Transverse colon (tissue), 4 donors: ENCODE measurements at regions of chr18 and their contacts with region 1.

Region 1: GRCh38 chr18:76982841-76983587 is 149.6 kb downstream of the MBP start:
- DNase-seq: peak; percentile 94
- H3K4me3 ChIP-seq: no peak overlapping the region
- H3K27ac ChIP-seq: no peak overlapping the region
- H3K4me1 ChIP-seq: peaks cover 1 to 22% (median 10%) of the 10 kb centered on the region in 4 donors
- H3K27me3 ChIP-seq: no peaks in the 10 kb centered on the region
- CTCF ChIP-seq: peak; percentile 89 to 96 (median 90)
- EP300 ChIP-seq: no peak
- POLR2A ChIP-seq: no peak

Region 2: GRCh38 chr18:75063615-75064512 is 1919.2 kb before region 1 on chr18:
- in situ Hi-C with region 1: no loop called
- intact Hi-C with region 1: no loop called
- DNase-seq: no peak
- H3K4me3 ChIP-seq: no peak overlapping the region
- H3K27ac ChIP-seq: no peak overlapping the region
- H3K4me1 ChIP-seq: no peaks in the 10 kb centered on the region
- H3K27me3 ChIP-seq: no peaks in the 10 kb centered on the region
- CTCF ChIP-seq: no peak
- EP300 ChIP-seq: no peak
- POLR2A ChIP-seq: no peak

Region 3: DNA sequence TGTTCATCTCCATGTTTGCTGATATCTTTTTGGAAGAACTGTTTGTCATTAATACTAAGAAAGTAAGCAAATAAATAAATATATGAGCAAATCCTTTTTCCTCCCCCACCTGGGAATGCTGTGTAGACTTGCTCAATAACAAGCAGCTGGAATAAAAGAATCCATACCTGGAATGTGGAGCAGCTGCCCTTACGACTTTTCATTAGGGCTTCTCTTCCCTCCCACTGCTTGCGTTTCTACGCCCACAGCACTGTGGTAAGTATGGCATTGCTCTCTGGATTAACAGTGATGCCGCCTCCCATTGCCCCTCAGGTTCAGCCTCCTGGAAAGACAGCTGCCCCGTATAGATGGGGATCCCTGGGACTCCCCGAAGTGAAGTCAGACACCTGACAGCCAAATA is 200.4 kb before region 1 on chr18:
- in situ Hi-C with region 1: no loop called
- intact Hi-C with region 1: no loop called
- DNase-seq: no peak
- H3K4me3 ChIP-seq: no peak overlapping the region
- H3K27ac ChIP-seq: no peak overlapping the region
- H3K4me1 ChIP-seq: no peaks in the 10 kb centered on the region
- H3K27me3 ChIP-seq: peaks cover 2% of the 10 kb centered on the region
- CTCF ChIP-seq: no peak
- EP300 ChIP-seq: no peak
- POLR2A ChIP-seq: no peak

Region 4: GRCh38 chr18:76803814-76804213 is 179.2 kb before region 1 on chr18:
- in situ Hi-C with region 1: loop called in 2 of 4 experiments (anchors 10 to 25 kb)
- intact Hi-C with region 1: loop called (anchors 5 kb)
- DNase-seq: peak; percentile 74
- H3K4me3 ChIP-seq: peak overlapping the region in 1 of 4 donors; percentile 10
- H3K27ac ChIP-seq: peak overlapping the region in 3 of 4 donors; percentile 24 to 35 (median 27)
- H3K4me1 ChIP-seq: peaks cover 5 to 22% (median 15%) of the 10 kb centered on the region in 4 donors
- H3K27me3 ChIP-seq: peaks cover 17% of the 10 kb centered on the region
- CTCF ChIP-seq: peak; percentile 71 to 75 (median 72)
- EP300 ChIP-seq: no peak
- POLR2A ChIP-seq: no peak

Region 5: GRCh38 chr18:76922107-76922506 is 60.9 kb before region 1 on chr18:
- in situ Hi-C with region 1: loop called in 1 of 4 experiments (anchors 10 kb)
- intact Hi-C with region 1: no loop called
- DNase-seq: peak; percentile 64
- H3K4me3 ChIP-seq: no peak overlapping the region
- H3K27ac ChIP-seq: no peak overlapping the region
- H3K4me1 ChIP-seq: peaks cover 0 to 8% (median 0%) of the 10 kb centered on the region in 4 donors
- H3K27me3 ChIP-seq: no peaks in the 10 kb centered on the region
- CTCF ChIP-seq: peak; percentile 42 to 77 (median 61)
- EP300 ChIP-seq: no peak
- POLR2A ChIP-seq: no peak

Region 6: DNA sequence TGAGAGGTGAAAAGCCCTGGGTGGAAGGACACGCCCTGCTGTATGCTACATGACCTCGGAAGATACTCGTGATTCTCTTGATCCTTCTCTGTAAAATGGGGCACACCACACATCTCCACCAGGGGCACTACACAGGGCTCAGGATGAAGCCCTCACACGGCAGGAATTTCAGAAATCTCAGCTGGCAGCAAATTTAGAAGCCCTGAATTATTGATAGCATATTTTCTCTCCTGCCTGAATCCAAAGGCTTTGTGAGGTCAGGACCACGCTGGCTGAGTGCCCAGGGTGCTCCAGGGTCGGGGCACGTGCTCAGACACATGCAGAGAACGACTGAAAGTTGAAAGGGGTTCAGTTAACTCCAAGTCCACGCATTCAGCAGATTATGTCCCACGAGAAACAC is 224.5 kb after region 1 on chr18:
- in situ Hi-C with region 1: loop called in 1 of 4 experiments (anchors 25 kb)
- intact Hi-C with region 1: no loop called
- DNase-seq: peak; percentile 32
- H3K4me3 ChIP-seq: no peak overlapping the region
- H3K27ac ChIP-seq: peak overlapping the region; percentile 44 to 69 (median 67)
- H3K4me1 ChIP-seq: peaks cover 0 to 34% (median 5%) of the 10 kb centered on the region in 4 donors
- H3K27me3 ChIP-seq: no peaks in the 10 kb centered on the region
- CTCF ChIP-seq: peak in 4 of 5 experiments; percentile 41 to 47 (median 46)
- EP300 ChIP-seq: no peak
- POLR2A ChIP-seq: no peak

Region 7: DNA sequence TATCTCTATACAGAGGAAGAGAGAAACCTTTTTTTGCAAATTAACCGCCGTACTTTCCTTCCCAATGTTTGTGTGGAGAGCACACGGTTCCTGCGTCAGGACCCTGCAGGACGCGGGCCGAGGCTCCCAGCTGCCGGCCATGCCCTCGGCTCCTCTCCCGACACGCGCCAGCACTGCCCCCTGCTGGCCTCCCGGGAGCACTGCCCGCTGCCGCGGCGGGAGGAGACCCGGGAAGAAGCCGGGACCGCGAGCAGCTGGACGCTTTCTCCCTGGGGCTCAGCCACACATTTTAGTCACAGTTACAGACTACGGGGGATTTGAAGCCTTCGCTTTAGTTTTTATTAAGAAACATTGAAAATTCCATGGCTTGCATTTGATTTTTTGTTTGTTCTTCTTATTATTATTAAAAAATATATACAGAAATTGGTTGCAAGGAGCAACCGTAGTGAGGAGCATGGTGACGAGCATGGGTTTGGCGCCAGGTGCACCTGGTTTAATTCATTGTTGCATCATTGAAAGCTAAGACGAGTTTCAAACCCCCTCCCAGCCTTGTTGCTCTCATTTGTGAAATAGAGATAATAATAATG is 667.9 kb after region 1 on chr18:
- in situ Hi-C with region 1: loop called in 1 of 4 experiments (anchors 25 kb)
- intact Hi-C with region 1: no loop called
- DNase-seq: peak; percentile 73
- H3K4me3 ChIP-seq: no peak overlapping the region
- H3K27ac ChIP-seq: no peak overlapping the region
- H3K4me1 ChIP-seq: peaks cover 0 to 6% (median 2%) of the 10 kb centered on the region in 4 donors
- H3K27me3 ChIP-seq: peaks cover 7% of the 10 kb centered on the region
- CTCF ChIP-seq: peak; percentile 79 to 94 (median 85)
- EP300 ChIP-seq: no peak
- POLR2A ChIP-seq: no peak